Activated CD4-positive, alpha-beta T cell treated with anti-CD3 and anti-CD28 coated beads, Interleukin-2, amount 10 ng/mL, durations not matched to agents 24 days and 14 days (primary cell): ENCODE measurements at regions of chr1 and their contacts with region 1.

Region 1: GRCh38 chr1:84077476-84078107 is 66.5 kb upstream of the PRKACB start:
- DNase-seq: peak; percentile 92
- H3K4me3 Mint-ChIP-seq: peak overlapping the region; percentile 78
- H3K27ac Mint-ChIP-seq: peak overlapping the region; percentile 61
- H3K4me1 Mint-ChIP-seq: peaks cover 10% of the 10 kb centered on the region
- H3K27me3 Mint-ChIP-seq: peaks cover 23% of the 10 kb centered on the region

Region 2: DNA sequence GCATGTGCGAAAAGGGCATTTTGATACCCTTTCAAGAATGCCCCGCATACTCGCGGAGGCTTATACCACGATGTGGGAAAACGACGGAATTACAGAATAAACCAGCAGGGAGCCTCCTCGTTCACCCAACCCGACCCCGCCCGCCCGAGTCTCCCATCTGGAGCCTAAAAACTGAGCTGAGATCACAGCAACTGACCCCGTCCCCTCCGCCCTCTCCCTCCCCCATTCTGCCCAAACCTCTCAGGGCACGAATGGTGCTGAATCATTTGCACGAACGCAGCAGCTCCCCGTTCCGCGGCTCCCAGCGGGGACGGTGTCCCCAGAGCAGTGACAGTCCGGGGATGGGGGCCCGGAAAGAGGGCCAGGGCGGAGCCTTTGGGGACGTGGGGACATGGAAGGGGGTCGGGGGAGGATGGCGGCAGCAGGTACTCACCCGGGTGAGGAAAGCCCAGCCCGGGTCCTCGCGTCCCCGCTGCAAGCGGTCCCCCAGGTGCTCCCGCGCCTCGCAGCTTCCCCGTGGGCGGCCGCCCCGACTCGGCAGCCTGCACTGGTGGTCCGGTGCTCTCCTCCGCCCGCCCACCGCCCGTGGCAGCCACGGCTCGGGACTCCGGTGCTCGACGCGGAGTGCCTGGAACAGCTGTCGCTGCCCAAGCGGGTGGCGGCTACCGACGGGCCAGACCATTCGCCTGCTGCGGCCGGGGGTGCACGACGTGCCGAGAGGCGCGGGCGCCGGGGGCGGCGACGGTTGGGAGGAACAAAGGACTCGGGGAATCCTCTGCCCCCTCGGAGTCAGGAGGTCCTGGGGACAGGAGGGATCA is 78.9 kb before region 1 on chr1 and contains the start of gene TTLL7:
- intact Hi-C with region 1: loop called (anchors 5 kb)
- DNase-seq: peak; percentile 91
- H3K4me3 Mint-ChIP-seq: peak within 1 kb of the TSS; percentile 85
- H3K27ac Mint-ChIP-seq: peak within 1 kb of the TSS; percentile 57
- H3K4me1 Mint-ChIP-seq: peaks cover 13% of the 10 kb centered on the region
- H3K27me3 Mint-ChIP-seq: peaks cover 63% of the 10 kb centered on the region
- total RNA-seq, gene TTLL7: 0.28 and 0.58 TPM in 2 replicates

Region 3: GRCh38 chr1:84090447-84091245 is 13.1 kb after region 1 on chr1:
- intact Hi-C with region 1: loop called (anchors 2 kb)
- DNase-seq: peak; percentile 65
- H3K4me3 Mint-ChIP-seq: peak overlapping the region; percentile 74
- H3K27ac Mint-ChIP-seq: peak overlapping the region; percentile 66
- H3K4me1 Mint-ChIP-seq: peaks cover 21% of the 10 kb centered on the region
- H3K27me3 Mint-ChIP-seq: no peaks in the 10 kb centered on the region

Region 4: DNA sequence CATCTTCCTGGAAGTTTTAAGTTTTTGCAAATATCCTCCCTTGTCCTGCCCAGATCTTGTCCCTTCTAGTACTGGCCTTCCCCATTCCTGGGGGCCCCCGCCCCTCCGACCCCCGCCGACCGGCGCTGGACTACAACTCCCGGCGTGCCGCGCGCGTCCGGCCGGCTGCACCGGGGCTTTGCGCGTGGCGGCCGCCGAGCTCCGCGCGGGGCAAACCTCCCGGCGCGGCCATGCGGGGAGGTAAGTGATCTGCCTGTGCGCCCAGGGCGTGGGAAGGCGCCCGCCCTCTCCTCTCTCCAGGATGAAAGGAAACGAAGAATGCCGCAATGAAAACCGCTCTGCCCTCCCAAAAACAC is 220.7 kb after region 1 on chr1:
- intact Hi-C with region 1: loop called (anchors 2 kb)
- DNase-seq: peak; percentile 88
- H3K4me3 Mint-ChIP-seq: peak overlapping the region; percentile 91
- H3K27ac Mint-ChIP-seq: peak overlapping the region; percentile 85
- H3K4me1 Mint-ChIP-seq: peaks cover 33% of the 10 kb centered on the region
- H3K27me3 Mint-ChIP-seq: peaks cover 13% of the 10 kb centered on the region